HepG2 (cell line): ENCODE measurements at regions of chr13 and their contacts with region 1.

Region 1: DNA sequence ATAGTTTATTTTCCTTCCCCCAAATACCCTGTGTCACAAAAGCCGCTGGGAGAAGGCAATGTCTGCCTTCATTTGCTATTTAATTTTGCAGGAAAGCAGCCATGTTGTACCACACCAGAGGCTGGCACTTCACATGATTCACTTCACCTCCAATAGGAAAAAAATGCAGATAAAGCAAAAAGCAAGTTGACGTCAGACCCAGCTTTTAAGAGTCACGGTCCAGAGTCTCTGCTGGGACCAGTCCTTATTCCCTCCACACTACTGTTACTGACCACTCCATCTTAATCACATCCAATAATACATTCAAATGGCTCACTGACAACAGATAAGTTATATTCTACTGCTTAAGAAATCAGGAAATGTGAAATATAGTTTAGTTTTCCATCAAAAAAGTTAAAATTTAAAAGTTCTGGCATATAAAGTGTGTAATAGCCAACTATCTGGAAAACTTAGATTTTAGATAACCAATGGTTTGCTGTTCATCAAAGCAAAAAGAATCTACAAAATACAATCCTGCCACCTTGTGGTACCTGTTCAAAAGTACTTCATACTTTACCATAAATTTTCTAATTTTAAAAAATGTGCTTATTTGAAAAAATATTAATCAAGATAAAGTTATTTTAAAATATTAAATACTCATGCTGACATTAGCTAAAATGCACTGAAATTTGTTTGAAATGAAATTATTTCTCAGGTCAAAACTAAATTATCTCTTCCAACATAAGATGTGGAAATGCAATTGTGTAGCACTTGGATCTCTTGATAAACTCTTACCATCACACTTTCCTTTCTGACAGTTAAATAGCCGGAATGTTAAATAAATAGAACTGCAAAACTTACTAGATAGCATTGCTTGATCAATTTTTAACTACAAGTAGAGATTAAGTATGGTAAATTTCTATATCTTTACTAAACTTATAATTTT is 97.3 kb downstream of the SERP2 start:
- DNase-seq: peak; percentile 29
- ATAC-seq: no peak
- H3K4me3 ChIP-seq: no peak overlapping the region
- H3K27ac ChIP-seq: no peak overlapping the region
- H3K4me1 ChIP-seq: no peaks in the 10 kb centered on the region
- H3K27me3 ChIP-seq: no peaks in the 10 kb centered on the region
- CTCF ChIP-seq: peak; percentile 47
- EP300 ChIP-seq: no peak
- POLR2A ChIP-seq: no peak
- RAD21 ChIP-seq: 0 out of 2 replicates have a peak, but pooled peaks have one; percentile 26

Region 2: DNA sequence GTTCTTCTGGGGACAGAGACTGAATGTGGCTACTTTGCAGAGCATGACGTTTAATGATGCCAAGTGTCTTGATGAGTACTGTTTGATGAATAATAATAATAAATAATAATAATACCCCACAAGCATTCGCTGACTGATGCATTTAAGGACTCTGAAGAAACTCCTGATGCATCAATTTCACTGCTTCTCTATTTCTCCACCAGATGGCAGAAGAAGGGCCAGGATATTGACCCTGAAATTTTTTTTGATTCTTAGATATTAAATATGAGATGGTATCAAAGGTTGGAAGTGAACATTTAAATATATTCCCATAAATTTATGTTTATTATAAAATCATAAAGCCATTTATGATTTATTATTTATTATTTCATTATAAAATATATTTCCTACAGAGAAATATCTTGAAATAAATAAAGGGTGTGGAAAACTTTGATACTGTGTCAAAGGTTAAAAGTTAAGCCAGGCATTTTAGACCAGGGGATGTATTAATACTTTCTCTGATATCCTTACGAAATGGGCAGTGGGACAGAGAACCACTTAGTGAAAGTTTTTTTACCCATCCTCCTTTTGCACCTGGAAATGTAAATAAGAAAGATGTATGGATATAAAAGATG is 420.3 kb before region 1 on chr13:
- CTCF ChIA-PET with region 1: interaction called, 8 read pairs
- POLR2A ChIA-PET with region 1: no interaction called
- in situ Hi-C with region 1: loop called (anchors 10 kb)
- intact Hi-C with region 1: loop called (anchors 1 kb)
- DNase-seq: peak; percentile 7
- ATAC-seq: no peak
- H3K4me3 ChIP-seq: no peak overlapping the region
- H3K27ac ChIP-seq: no peak overlapping the region
- H3K4me1 ChIP-seq: no peaks in the 10 kb centered on the region
- H3K27me3 ChIP-seq: no peaks in the 10 kb centered on the region
- CTCF ChIP-seq: peak; percentile 41
- EP300 ChIP-seq: no peak
- POLR2A ChIP-seq: no peak
- RAD21 ChIP-seq: no peak

Region 3: DNA sequence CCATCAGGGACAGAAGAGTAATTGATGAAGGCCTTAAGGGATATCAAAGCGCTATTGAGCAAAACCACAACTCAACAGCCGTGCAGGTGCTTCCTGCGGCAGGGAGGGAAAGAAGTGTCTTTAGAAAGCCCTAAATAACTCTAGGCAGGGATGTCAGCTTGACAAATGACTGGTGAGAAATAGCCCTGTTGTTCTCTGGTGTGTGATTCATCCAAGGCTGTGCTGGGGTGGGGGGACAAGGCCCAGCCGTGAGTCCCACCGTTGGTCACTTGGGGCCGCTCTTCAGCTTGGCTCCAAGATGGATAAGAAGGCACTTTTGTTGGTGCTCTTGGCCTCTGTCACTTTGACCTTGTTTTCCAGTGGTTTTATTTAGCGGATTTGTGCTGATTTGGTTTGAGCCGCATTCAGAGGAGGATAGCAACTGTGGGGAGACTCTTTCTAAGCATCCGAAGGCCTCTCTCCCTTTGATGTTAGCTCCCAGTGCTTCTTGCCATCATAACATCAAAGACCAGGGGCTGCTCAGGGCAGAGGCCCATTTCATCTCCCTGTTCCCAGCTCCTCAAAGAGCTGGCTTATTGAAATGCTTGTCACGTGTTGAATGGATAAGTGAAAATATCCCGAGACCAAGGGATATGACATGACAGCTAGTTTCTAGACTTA is 227.6 kb before region 1 on chr13:
- CTCF ChIA-PET with region 1: interaction called, 6 read pairs
- POLR2A ChIA-PET with region 1: no interaction called
- in situ Hi-C with region 1: no loop called
- intact Hi-C with region 1: loop called (anchors 1 kb)
- DNase-seq: peak; percentile 54
- ATAC-seq: peak; percentile 98
- H3K4me3 ChIP-seq: no peak overlapping the region
- H3K27ac ChIP-seq: no peak overlapping the region
- H3K4me1 ChIP-seq: no peaks in the 10 kb centered on the region
- H3K27me3 ChIP-seq: peaks cover 0 to 6% of the 10 kb centered on the region in 2 experiments; a peak in 1 of 5 replicates
- CTCF ChIP-seq: peak; percentile 74
- EP300 ChIP-seq: no peak
- POLR2A ChIP-seq: no peak
- RAD21 ChIP-seq: peak; percentile 66

Region 4: DNA sequence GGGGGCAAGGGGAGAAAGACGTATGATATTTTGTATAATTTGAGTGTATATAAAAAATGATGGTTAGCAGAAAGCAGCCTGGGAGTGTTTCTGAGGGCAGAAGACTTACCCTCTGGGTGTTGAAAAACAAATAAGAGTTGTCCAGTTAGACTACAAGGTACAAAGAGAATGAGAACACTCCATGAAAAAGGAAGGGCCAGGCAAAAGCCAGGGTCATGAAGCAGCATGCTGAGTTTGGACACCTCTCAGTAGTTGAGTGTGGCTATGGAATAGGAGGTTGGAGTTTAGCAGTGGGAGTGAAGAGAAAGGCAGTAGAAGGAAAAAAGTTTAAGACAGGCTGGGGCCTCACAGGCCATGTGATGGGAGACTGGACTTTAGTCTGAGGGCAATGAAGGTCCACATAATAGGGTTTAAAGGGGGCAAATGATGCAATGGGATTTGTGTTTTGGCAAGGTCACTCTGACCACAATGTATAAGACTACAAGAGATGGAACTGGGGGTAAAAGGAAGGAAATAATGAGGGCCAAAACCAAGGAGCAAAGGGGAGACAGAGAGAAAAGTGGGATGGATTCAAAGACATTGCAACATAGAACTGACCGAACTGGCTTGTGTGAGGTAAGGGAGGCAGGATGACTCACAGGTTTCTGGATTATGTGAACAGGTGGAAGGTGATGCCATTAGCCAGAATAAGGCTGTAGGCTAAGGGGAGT is 20.7 kb before region 1 on chr13:
- CTCF ChIA-PET with region 1: no interaction called
- POLR2A ChIA-PET with region 1: no interaction called
- in situ Hi-C with region 1: no loop called
- intact Hi-C with region 1: no loop called
- DNase-seq: peak; percentile 42
- ATAC-seq: peak; percentile 75
- H3K4me3 ChIP-seq: no peak overlapping the region
- H3K27ac ChIP-seq: peak overlapping the region; percentile 76
- H3K4me1 ChIP-seq: peaks cover 40% of the 10 kb centered on the region
- H3K27me3 ChIP-seq: no peaks in the 10 kb centered on the region
- CTCF ChIP-seq: no peak
- EP300 ChIP-seq: peak in 1 of 2 experiments; percentile 56; a peak in 2 of 4 replicates
- POLR2A ChIP-seq: no peak
- RAD21 ChIP-seq: no peak

Region 5: DNA sequence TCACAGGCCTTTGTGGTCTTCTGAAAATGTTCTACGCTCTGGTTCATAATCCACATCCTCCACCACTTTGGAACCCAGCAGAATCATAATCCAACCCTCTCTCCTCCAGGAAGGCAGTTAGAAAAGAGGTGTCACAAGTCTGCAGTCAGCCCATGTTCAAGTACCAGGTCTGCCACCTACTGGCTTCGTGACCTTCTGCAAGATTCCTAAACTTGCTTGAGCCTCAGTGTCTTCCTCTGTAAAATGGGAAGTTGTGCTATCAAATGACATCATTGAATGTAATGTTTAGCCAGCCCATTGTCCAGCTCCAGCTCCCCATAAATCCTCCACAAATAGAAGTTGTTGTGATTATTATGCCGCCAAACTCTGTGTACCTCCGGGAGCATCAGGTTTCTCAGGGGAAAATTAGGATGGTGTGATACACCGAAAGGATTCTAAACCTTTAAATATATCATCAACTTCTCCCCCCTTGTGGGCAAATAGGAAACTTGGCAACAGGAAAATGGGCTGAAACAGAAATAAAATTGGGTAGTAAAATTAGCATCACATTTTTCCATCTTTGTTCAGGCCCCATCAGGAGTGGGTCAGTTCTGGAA is 408.7 kb after region 1 on chr13:
- CTCF ChIA-PET with region 1: no interaction called
- POLR2A ChIA-PET with region 1: no interaction called
- in situ Hi-C with region 1: loop called (anchors 10 kb)
- intact Hi-C with region 1: no loop called
- DNase-seq: no peak
- ATAC-seq: peak; percentile 31; the same call in 1 of the 3 replicates
- H3K4me3 ChIP-seq: no peak overlapping the region
- H3K27ac ChIP-seq: no peak overlapping the region
- H3K4me1 ChIP-seq: peaks cover 7% of the 10 kb centered on the region
- H3K27me3 ChIP-seq: no peaks in the 10 kb centered on the region; a peak in 1 of 5 replicates
- CTCF ChIP-seq: peak; percentile 65
- EP300 ChIP-seq: no peak
- POLR2A ChIP-seq: no peak
- RAD21 ChIP-seq: no peak